IMR-90 (cell line): ENCODE measurements at regions of chr11 and their contacts with region 1.

Region 1: GRCh38 chr11:95150946-95151684 is 61.5 kb downstream of the ENDOD1 start:
- DNase-seq: peak; percentile 78
- ATAC-seq: peak; percentile 91
- H3K4me3 ChIP-seq: peak overlapping the region; percentile 35
- H3K27ac ChIP-seq: no peak overlapping the region
- H3K4me1 ChIP-seq: peaks cover 7% of the 10 kb centered on the region; the same call in 1 of the 2 replicates
- H3K27me3 ChIP-seq: 0 out of 2 replicates have a peak, but pooled peaks cover 2% of the 10 kb centered on the region
- CTCF ChIP-seq: peak; percentile 89
- POLR2A ChIP-seq: no peak
- RAD21 ChIP-seq: no peak

Region 2: DNA sequence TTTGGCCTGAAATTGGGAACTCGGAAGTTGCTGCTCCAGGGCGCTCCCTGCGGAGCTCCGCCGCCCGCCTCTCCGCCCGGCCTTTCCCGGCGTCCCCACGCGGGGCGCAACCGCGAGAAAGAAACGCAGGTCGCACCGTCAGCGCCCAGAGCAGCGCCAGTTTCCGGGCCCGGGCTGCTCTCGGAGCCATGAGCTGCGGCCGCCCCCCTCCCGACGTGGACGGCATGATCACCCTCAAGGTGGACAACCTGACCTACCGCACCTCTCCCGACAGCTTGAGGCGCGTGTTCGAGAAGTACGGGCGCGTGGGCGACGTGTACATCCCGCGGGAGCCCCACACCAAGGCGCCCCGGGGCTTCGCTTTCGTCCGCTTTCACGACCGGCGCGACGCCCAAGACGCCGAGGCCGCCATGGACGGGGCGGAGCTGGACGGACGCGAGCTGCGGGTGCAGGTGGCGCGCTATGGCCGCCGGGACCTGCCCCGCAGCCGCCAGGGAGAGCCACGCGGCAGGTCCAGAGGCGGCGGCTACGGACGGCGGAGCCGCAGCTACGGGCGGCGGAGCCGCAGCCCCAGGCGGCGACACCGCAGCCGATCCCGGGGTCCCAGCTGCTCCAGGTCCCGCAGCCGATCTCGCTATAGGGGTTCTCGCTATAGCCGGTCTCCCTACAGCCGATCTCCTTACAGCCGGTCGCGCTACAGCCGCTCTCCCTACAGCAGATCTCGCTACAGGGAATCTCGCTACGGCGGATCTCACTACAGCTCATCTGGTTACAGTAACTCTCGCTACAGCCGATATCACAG is 83.9 kb before region 1 on chr11:
- CTCF ChIA-PET with region 1: interaction called, 4 read pairs
- POLR2A ChIA-PET with region 1: no interaction called
- dilution Hi-C with region 1: no loop called
- in situ Hi-C with region 1: no loop called
- intact Hi-C with region 1: loop called (anchors 1 kb)
- DNase-seq: peak; percentile 72
- ATAC-seq: peak; percentile 90
- H3K4me3 ChIP-seq: peak overlapping the region; percentile 91
- H3K27ac ChIP-seq: peak overlapping the region; percentile 85
- H3K4me1 ChIP-seq: no peaks in the 10 kb centered on the region
- H3K27me3 ChIP-seq: no peaks in the 10 kb centered on the region
- CTCF ChIP-seq: peak; percentile 65
- POLR2A ChIP-seq: peak; percentile 57
- RAD21 ChIP-seq: peak; percentile 24; the same call in 1 of the 2 replicates

Region 3: GRCh38 chr11:95076416-95076815 is 74.7 kb before region 1 on chr11:
- CTCF ChIA-PET with region 1: interaction called, 3 read pairs
- POLR2A ChIA-PET with region 1: no interaction called
- dilution Hi-C with region 1: no loop called
- in situ Hi-C with region 1: no loop called
- intact Hi-C with region 1: loop called (anchors 2 kb)
- DNase-seq: peak; percentile 75
- ATAC-seq: peak; percentile 67
- H3K4me3 ChIP-seq: no peak overlapping the region
- H3K27ac ChIP-seq: 0 out of 2 replicates have a peak overlapping the region, but pooled peaks have one; percentile 11
- H3K4me1 ChIP-seq: peaks cover 3% of the 10 kb centered on the region; the same call in 1 of the 2 replicates
- H3K27me3 ChIP-seq: no peaks in the 10 kb centered on the region
- CTCF ChIP-seq: no peak
- POLR2A ChIP-seq: no peak
- RAD21 ChIP-seq: no peak

Region 4: DNA sequence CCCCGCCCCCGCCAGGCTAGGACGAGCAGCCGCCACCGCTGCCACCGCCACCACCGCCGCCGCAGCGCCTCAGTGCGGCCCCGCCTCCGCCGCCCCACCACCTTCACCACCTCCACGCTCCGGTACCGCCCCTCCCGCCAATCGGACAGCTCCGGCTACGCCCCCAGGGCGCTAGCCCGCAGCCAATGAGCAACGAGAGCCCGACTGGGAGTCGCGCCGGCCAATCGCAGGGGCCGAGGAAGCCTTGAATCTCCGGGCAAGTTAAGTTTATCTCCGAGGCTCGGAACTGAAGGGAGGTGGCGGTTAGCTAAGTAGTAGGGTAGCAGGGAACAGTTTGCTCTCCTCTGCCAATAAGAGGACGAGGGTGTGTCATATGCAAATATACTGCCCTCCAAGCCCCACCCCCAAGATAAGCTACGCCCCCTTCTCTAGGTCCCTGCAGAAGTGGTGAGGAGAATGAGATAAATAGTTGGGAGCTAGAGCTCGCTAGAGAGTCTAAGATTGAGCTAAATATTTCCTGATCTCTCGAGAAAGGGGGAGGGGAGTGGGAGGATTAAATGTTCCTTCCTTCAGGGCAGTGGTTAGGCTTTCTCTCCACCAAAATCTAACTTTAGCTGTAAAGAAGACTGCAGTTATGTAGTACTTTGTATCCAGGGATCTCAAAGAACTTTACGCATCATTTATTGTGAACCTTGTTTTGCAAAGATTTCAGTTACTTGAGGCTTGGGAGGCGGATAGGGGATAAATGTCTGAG is 80.2 kb after region 1 on chr11 and contains the start of gene SESN3:
- CTCF ChIA-PET with region 1: no interaction called
- POLR2A ChIA-PET with region 1: no interaction called
- dilution Hi-C with region 1: no loop called
- in situ Hi-C with region 1: no loop called
- intact Hi-C with region 1: loop called (anchors 1 kb)
- DNase-seq: peak; percentile 96
- ATAC-seq: peak; percentile 97
- H3K4me3 ChIP-seq: peak within 1 kb of the TSS; percentile 51
- H3K27ac ChIP-seq: peak within 1 kb of the TSS; percentile 81; the same call in 1 of the 2 replicates
- H3K4me1 ChIP-seq: no peaks in the 10 kb centered on the region
- H3K27me3 ChIP-seq: no peaks in the 10 kb centered on the region; the same call in 1 of the 2 replicates
- CTCF ChIP-seq: no peak
- POLR2A ChIP-seq: no peak
- RAD21 ChIP-seq: no peak
- total RNA-seq, gene SESN3: 7.7 and 10.0 TPM in 2 replicates

Region 5: DNA sequence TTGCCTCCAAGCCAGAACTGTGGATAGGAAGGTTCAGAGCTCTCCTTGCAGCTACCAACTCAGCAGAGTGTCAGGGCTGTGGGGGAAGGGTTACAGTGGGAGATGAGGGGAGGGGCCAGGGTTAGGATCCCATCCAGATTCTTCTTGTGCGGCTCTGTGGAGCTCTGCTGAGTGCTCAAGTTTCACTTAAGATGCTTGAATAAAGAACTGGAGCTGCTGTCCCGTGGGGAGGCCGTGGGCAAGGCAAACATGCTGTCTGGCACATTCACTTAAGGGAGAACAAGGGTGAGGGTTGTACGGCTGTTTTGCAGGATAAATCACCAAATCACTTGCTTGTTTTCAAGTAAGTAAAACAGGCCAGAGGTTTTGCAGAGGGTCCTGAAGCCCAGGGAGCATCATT is 441.4 kb after region 1 on chr11:
- CTCF ChIA-PET with region 1: no interaction called
- POLR2A ChIA-PET with region 1: no interaction called
- dilution Hi-C with region 1: no loop called
- in situ Hi-C with region 1: no loop called
- intact Hi-C with region 1: loop called (anchors 10 kb)
- DNase-seq: peak; percentile 23
- ATAC-seq: peak; percentile 69
- H3K4me3 ChIP-seq: no peak overlapping the region
- H3K27ac ChIP-seq: no peak overlapping the region
- H3K4me1 ChIP-seq: peaks cover 8% of the 10 kb centered on the region; the same call in 1 of the 2 replicates
- H3K27me3 ChIP-seq: no peaks in the 10 kb centered on the region
- CTCF ChIP-seq: no peak
- POLR2A ChIP-seq: no peak
- RAD21 ChIP-seq: no peak

Region 6: DNA sequence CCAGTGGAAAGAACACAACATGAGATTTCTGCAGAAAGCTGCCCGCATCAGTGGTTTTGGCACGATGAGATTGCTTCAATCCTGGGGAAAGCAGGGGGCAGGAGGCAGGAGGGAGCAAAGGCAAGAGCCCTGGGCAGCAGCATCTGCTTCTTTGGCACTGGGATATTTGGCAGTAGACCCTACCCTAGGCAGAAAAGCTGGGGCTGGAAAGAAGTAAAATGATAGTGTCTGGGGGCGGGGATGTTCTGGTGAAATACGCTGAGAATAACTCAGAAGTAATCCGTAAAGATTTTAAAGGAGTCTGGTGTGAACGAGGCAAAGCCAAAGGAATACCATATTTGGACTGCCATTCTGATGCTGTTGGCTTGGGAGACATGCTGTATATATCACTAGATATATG is 576.5 kb after region 1 on chr11:
- CTCF ChIA-PET with region 1: no interaction called
- POLR2A ChIA-PET with region 1: no interaction called
- dilution Hi-C with region 1: no loop called
- in situ Hi-C with region 1: no loop called
- intact Hi-C with region 1: no loop called
- DNase-seq: no peak
- ATAC-seq: no peak
- H3K4me3 ChIP-seq: no peak overlapping the region
- H3K27ac ChIP-seq: no peak overlapping the region
- H3K4me1 ChIP-seq: no peaks in the 10 kb centered on the region
- H3K27me3 ChIP-seq: peaks cover 13% of the 10 kb centered on the region
- CTCF ChIP-seq: no peak
- POLR2A ChIP-seq: no peak
- RAD21 ChIP-seq: no peak

Region 7: GRCh38 chr11:95764267-95764898 is 613.3 kb after region 1 on chr11:
- CTCF ChIA-PET with region 1: interaction called, 4 read pairs
- POLR2A ChIA-PET with region 1: interaction called, 6 read pairs
- dilution Hi-C with region 1: no loop called
- in situ Hi-C with region 1: loop called (anchors 5 kb)
- intact Hi-C with region 1: loop called (anchors 1 kb)
- DNase-seq: peak; percentile 67
- ATAC-seq: peak; percentile 82
- H3K4me3 ChIP-seq: no peak overlapping the region
- H3K27ac ChIP-seq: no peak overlapping the region
- H3K4me1 ChIP-seq: peaks cover 2% of the 10 kb centered on the region; the same call in 1 of the 2 replicates
- H3K27me3 ChIP-seq: peaks cover 9% of the 10 kb centered on the region
- CTCF ChIP-seq: peak; percentile 75
- POLR2A ChIP-seq: no peak
- RAD21 ChIP-seq: peak; percentile 71